BJ (cell line): ENCODE measurements at regions of chr14 and their contacts with region 1.

Region 1: GRCh38 chr14:73662487-73662943 is 17.7 kb downstream of the DNAL1 start:
- DNase-seq: peak; percentile 89
- H3K4me3 ChIP-seq: no peak overlapping the region
- H3K27me3 ChIP-seq: no peaks in the 10 kb centered on the region
- CTCF ChIP-seq: peak; percentile 73

Region 2: DNA sequence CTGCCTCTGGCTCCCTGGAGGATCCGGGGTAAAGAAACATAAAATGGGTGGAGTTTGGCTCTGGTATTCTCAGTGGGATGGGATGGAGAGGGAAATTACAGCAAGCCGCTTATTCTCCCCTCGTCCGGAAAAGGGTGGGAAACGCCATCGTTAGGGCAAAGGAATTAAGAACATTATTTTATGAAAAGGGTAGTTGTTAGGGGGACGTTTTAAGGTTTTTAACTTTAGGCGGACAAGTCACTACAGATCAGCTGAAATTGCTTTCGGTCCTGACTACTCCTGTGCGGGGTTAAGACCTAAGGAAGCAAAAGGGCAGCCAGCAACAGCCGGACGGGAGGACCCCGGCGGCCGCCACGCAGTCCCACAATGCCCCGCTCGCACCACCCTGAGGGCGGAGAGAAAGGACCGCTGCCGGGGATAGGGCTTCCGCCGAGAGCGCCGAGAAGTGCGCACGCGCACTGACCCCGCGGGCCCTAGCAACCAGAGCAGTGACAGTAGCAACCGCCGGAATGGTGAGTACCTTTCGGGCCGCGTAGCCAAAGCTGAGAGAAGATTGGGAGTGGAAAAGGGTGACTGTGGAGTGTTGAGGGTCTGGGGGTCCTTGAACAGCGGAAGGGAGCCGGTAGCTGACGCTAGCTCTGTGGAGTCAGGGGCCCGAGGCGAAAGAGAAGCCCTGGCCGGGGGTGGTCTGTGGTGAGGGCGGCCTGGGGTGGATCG is 17.8 kb before region 1 on chr14 and contains the start of gene DNAL1:
- CTCF ChIA-PET with region 1: interaction called, 15 read pairs
- POLR2A ChIA-PET with region 1: no interaction called
- DNase-seq: peak; percentile 44
- H3K4me3 ChIP-seq: peak within 1 kb of the TSS; percentile 88
- H3K27me3 ChIP-seq: no peaks in the 10 kb centered on the region
- CTCF ChIP-seq: no peak
- polyA plus RNA-seq, gene DNAL1: 2.4 and 6.6 TPM in 2 replicates

Region 3: DNA sequence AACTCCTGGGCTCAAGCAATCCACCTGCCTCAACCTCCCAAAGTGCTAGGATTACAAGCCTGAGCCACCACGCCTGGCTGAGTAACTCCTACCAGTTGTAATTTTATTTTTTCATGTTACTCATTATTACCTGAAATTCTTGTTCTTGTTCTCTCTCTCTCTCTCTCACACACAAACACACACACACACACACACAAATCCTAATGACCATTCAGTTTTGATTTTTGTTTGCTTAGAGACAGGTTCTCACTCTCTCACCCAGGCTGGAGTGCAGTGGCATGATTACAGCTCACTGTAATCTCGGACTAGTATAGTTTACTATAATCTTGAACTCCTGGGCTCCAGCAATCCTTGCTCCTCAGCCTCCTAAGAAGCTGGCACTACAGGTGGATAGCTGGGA is 12.5 kb after region 1 on chr14:
- CTCF ChIA-PET with region 1: interaction called, 35 read pairs
- POLR2A ChIA-PET with region 1: no interaction called
- DNase-seq: no peak
- H3K4me3 ChIP-seq: no peak overlapping the region
- H3K27me3 ChIP-seq: no peaks in the 10 kb centered on the region
- CTCF ChIP-seq: no peak